ENCODE measurements at regions of chr16 and their contacts with region 1.

Region 1: DNA sequence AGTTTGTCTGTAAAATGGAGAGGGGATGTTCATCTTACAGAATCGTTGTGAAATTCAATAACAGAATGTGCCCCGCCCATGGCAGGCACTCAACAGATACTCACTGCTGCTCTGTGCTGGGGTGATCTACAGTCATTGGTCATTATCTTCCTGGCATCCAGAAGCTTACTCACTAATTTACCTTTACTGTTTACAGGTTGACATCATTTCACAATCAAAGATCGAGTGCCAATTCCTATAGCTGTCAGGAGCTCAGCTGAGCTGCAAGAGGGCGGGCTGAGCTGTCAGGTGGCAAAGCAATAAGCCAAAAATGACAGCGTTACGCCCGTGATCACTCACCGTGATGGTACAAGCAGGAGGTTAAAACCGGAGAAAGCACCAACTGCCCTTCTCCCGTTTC is 51.2 kb downstream of the LITAF start:
- DNase-seq: peak; percentile 91
- H3K4me3 Mint-ChIP-seq: no peak overlapping the region
- H3K27ac Mint-ChIP-seq: no peak overlapping the region
- H3K4me1 Mint-ChIP-seq: peaks cover 17% of the 10 kb centered on the region
- H3K27me3 Mint-ChIP-seq: no peaks in the 10 kb centered on the region
- CTCF ChIP-seq: no peak

Region 2: DNA sequence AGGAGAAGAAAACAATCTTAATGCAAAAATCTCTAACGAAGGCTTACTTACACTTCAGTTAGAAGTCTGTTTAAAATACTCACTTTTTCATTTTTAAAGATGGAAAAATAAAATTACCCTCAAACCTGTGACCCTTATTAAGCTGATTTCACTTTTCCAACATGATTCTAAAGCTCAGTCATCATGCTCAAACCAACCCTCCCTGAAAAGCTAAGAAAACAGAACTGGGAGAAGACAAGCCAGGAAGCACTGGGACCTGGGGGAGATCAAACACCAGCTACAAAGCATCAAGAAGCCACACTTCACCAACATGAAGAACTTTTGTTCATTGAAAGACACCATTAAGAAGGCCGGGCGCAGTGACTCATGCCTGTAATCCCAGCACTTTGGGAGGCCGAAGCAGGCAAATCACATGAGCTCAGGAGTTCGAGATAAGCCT is 37.6 kb before region 1 on chr16:
- CTCF ChIA-PET with region 1: interaction called, 9 read pairs
- POLR2A ChIA-PET with region 1: interaction called, 37 read pairs
- intact Hi-C with region 1: no loop called
- DNase-seq: peak; percentile 75
- H3K4me3 Mint-ChIP-seq: peak overlapping the region; percentile 41
- H3K27ac Mint-ChIP-seq: peak overlapping the region; percentile 97
- H3K4me1 Mint-ChIP-seq: peaks cover 20% of the 10 kb centered on the region
- H3K27me3 Mint-ChIP-seq: no peaks in the 10 kb centered on the region
- CTCF ChIP-seq: no peak

Region 3: GRCh38 chr16:11586856-11587642 is 51.6 kb after region 1 on chr16 and contains the start of gene LITAF:
- CTCF ChIA-PET with region 1: interaction called, 5 read pairs
- POLR2A ChIA-PET with region 1: interaction called, 32 read pairs
- intact Hi-C with region 1: loop called (anchors 2 kb)
- DNase-seq: peak; percentile 66
- H3K4me3 Mint-ChIP-seq: peak within 1 kb of the TSS; percentile 84
- H3K27ac Mint-ChIP-seq: peak within 1 kb of the TSS; percentile 96
- H3K4me1 Mint-ChIP-seq: peaks cover 31% of the 10 kb centered on the region
- H3K27me3 Mint-ChIP-seq: no peaks in the 10 kb centered on the region
- CTCF ChIP-seq: no peak
- total RNA-seq, gene LITAF: 120 and 161 TPM in 2 replicates

Region 4: DNA sequence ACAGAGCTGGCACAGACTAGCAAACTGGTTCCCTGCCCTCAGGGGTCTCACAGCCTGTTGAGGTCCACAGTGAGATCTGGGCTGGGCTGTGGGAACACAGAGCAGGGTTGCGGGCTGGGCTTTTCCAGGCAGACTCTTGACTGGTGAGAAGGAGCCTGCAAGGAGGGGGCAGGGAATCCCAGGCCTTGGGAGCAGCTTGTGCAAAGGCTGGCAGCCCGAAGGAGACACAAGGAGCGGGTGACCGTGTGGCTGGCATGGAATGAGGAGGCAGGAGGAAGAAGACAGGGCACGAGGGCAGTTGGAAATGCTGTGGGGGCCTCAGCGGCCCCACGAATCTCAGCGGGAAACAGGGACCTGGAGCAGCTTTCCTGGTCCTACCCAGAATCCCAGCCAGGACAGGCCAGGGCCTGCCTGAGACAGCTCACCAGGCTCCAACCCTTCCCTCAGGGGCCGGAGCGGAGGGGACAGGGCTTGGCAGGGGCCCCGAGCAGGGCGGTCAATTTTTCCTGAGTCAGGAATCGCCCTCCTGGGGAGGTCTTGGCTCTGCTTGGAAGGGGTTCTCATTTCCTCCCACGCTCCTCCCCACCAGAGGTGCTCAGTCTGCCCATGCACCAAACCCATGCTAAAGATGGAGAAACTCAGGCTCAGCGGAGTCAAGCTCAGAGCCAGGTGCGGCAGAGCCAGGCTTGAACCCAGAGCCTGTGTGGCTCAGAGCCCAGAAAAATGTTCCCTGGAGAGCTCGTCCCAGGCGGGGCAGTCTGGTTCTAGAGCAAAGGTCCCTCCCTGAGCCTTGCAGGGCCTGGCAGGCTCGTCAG is 123.6 kb after region 1 on chr16:
- CTCF ChIA-PET with region 1: interaction called, 11 read pairs
- POLR2A ChIA-PET with region 1: interaction called, 22 read pairs
- intact Hi-C with region 1: no loop called
- DNase-seq: peak; percentile 97
- H3K4me3 Mint-ChIP-seq: peak overlapping the region; percentile 37
- H3K27ac Mint-ChIP-seq: peak overlapping the region; percentile 94
- H3K4me1 Mint-ChIP-seq: peaks cover 18% of the 10 kb centered on the region
- H3K27me3 Mint-ChIP-seq: no peaks in the 10 kb centered on the region
- CTCF ChIP-seq: no peak

Region 5: GRCh38 chr16:11715246-11715947 is 179.9 kb after region 1 on chr16:
- CTCF ChIA-PET with region 1: interaction called, 11 read pairs
- POLR2A ChIA-PET with region 1: no interaction called
- intact Hi-C with region 1: loop called (anchors 1 kb)
- DNase-seq: no peak
- H3K4me3 Mint-ChIP-seq: no peak overlapping the region
- H3K27ac Mint-ChIP-seq: no peak overlapping the region
- H3K4me1 Mint-ChIP-seq: no peaks in the 10 kb centered on the region
- H3K27me3 Mint-ChIP-seq: no peaks in the 10 kb centered on the region
- CTCF ChIP-seq: no peak

Measured in MCF 10A (cell line).